ENCODE measurements at regions of chr1 and their contacts with region 1.

Region 1: DNA sequence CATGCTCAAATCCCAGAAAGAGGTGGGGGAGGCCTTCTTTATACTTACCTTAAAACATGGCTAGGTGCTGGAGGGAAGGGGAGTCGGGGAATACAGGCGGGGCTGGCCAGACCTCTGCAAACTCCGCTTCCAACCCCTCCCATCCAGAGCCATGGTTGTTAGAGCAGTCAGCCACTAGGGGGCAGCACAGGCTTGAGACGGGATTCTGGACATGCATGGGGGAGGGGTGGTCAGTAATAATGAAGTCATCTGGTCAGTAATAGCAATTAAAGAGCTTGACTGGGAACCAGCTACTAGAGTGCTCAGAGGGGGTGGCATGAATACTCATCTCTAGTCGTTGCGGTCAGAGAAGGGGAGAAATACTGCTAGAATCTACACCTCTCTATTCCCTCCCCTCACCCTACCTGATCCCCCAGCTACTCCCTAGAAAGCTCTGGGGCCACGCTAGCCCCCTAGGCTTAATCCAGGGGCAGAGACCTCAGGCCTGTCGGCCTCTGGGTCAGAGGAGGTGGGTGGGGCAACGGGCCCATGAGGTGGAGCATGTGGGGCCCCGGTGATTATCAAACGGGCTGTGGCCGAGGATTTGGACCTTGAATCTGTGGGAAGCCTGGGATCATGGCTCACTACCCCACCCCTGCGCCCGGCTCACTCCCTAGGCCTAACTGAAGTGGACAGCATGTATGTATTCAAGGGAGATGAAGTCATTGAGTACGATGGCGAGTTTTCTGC is 2.9 kb downstream of the CASQ1 start:
- DNase-seq: peak; percentile 85 to 90 (median 88)
- ATAC-seq: peak; percentile 82 to 90 (median 84)
- H3K4me3 ChIP-seq: no peak overlapping the region
- H3K27ac ChIP-seq: peak overlapping the region in 11 of 12 donors; percentile 34 to 86 (median 72)
- H3K4me1 ChIP-seq: peaks cover 0 to 42% (median 21%) of the 10 kb centered on the region in 12 donors
- H3K27me3 ChIP-seq: no peaks in the 10 kb centered on the region
- CTCF ChIP-seq: peak; percentile 92 to 99 (median 96)
- POLR2A ChIP-seq: no peak

Region 2: DNA sequence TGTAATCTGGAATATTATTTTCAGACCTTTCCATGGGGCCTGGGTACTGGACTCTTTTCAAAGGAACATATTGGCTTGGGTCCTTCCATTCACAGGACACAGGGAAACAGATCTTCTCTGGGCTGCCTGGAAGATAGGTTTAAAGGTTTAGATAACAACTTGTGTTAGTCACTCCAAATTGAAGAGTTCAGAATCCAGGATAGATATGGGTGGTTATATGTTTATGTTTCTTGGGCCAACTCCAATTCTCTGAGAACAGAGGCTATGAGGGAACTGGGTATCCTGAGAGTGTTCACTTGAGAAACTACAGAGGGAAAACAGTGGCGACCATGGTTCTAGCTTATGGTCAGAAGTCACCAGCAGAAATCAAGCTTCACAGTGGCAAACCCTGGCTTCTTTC is 152.8 kb before region 1 on chr1:
- intact Hi-C with region 1: loop called in 1 of 10 experiments (anchors 5 kb)
- DNase-seq: no peak
- ATAC-seq: no peak
- H3K4me3 ChIP-seq: no peak overlapping the region
- H3K27ac ChIP-seq: no peak overlapping the region
- H3K4me1 ChIP-seq: no peaks in the 10 kb centered on the region
- H3K27me3 ChIP-seq: no peaks in the 10 kb centered on the region
- CTCF ChIP-seq: no peak
- POLR2A ChIP-seq: no peak

Region 3: GRCh38 chr1:160108888-160109662 is 84.2 kb before region 1 on chr1:
- intact Hi-C with region 1: loop called in 5 of 10 experiments (anchors 5 to 10 kb)
- DNase-seq: no peak
- ATAC-seq: peak in 1 of 4 donors; percentile 19
- H3K4me3 ChIP-seq: no peak overlapping the region
- H3K27ac ChIP-seq: no peak overlapping the region
- H3K4me1 ChIP-seq: peaks cover 0 to 31% (median 15%) of the 10 kb centered on the region in 12 donors
- H3K27me3 ChIP-seq: no peaks in the 10 kb centered on the region
- CTCF ChIP-seq: peak; percentile 24 to 60 (median 42)
- POLR2A ChIP-seq: no peak

Region 4: DNA sequence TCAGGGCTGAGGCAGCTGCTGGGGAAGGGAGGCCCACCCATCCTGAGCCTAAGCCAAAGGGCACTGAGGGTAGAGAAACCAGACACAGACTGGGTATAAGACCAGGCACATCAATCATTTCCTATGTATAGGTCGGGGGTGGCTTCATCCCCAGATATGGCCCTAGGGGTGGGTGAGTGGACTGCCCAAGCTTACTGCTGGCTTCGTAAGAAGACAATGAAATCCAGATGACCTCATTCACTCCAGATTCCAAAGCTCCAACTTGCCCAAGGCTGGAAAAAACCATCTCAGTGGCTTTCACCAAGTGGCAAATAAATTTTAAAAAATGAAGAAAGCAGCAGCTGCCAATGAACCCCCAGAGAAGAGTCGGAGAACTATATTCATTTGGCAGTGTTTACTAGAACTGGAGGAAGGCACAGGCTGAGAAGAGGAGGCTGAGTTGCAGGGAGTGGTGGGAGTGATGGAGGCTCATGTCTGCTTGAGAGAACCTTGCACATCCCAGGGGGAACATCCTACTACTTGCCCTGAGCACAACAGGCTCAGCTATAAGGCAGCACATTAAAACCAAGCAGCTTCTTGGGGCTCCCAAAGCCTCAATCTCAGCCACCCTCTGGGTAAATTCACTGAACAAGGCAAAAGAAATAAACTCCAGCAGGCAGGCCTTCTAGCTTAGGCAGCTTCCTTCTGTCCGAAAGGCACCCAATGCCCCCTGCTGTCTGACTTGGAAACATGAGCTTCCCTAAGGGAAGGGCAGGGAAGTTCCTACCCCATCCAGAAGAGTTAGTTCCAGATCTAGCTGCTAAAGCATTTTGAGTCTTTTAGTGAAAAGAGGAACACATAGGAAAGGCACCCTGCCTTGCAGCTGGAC is 26.0 kb after region 1 on chr1:
- intact Hi-C with region 1: loop called in 8 of 10 experiments (anchors 1 to 2 kb)
- DNase-seq: peak in 4 of 5 donors; percentile 55 to 67 (median 64)
- ATAC-seq: peak; percentile 52 to 87 (median 82)
- H3K4me3 ChIP-seq: no peak overlapping the region
- H3K27ac ChIP-seq: peak overlapping the region; percentile 17 to 80 (median 56)
- H3K4me1 ChIP-seq: peaks cover 3 to 51% (median 32%) of the 10 kb centered on the region in 12 donors
- H3K27me3 ChIP-seq: no peaks in the 10 kb centered on the region
- CTCF ChIP-seq: peak; percentile 49 to 78 (median 69)
- POLR2A ChIP-seq: no peak

Region 5: GRCh38 chr1:160251687-160252526 is 58.7 kb after region 1 on chr1:
- intact Hi-C with region 1: loop called in 9 of 10 experiments (anchors 1 to 10 kb)
- DNase-seq: peak in 4 of 5 donors; percentile 58 to 72 (median 64)
- ATAC-seq: peak; percentile 90 to 95 (median 94)
- H3K4me3 ChIP-seq: no peak overlapping the region
- H3K27ac ChIP-seq: peak overlapping the region in 8 of 12 donors; percentile 15 to 59 (median 41)
- H3K4me1 ChIP-seq: peaks cover 0 to 50% (median 27%) of the 10 kb centered on the region in 12 donors
- H3K27me3 ChIP-seq: no peaks in the 10 kb centered on the region
- CTCF ChIP-seq: peak; percentile 48 to 82 (median 68)
- POLR2A ChIP-seq: no peak

Region 6: DNA sequence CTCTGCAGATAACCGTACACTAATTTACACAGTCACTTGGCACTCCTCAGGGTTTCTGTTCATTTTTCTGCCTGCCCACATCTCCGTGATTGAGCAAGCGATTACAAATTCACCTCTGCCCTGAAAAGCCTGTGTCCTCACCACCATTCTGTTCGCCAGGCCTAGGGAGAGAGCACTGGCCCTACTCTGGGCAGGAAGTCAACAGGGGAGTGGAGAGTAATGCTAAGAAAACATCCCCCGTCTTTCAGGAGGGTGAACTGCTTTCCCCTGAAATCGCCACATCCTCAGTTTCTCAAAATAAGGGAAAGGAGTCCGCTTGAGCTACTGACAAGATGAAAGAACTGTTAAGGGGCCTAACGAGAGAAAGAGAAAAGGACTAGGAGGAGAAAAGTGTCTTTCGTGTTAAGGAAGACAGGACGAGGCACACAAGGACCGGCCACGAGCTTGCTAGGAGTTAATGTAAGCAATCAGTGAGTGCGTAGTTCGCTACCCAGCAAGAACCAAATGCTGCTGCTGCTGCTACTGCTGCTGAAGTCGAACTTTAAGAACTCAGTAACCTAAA is 91.0 kb after region 1 on chr1:
- intact Hi-C with region 1: no loop called
- DNase-seq: no peak
- ATAC-seq: peak in 2 of 4 donors; percentile 37 to 47
- H3K4me3 ChIP-seq: peak overlapping the region; percentile 76 to 98 (median 88)
- H3K27ac ChIP-seq: peak overlapping the region; percentile 56 to 92 (median 84)
- H3K4me1 ChIP-seq: peaks cover 0 to 25% (median 18%) of the 10 kb centered on the region in 12 donors
- H3K27me3 ChIP-seq: no peaks in the 10 kb centered on the region
- CTCF ChIP-seq: no peak
- POLR2A ChIP-seq: no peak

Region 7: GRCh38 chr1:160376525-160377131 is 183.4 kb after region 1 on chr1:
- intact Hi-C with region 1: loop called in 4 of 10 experiments (anchors 2 to 10 kb)
- DNase-seq: no peak
- ATAC-seq: peak; percentile 56 to 86 (median 80)
- H3K4me3 ChIP-seq: peak overlapping the region in 1 of 12 donors; percentile 20
- H3K27ac ChIP-seq: peak overlapping the region in 4 of 12 donors; percentile 11 to 42 (median 40)
- H3K4me1 ChIP-seq: peaks cover 0 to 23% (median 10%) of the 10 kb centered on the region in 12 donors
- H3K27me3 ChIP-seq: peaks cover 0 to 3% (median 0%) of the 10 kb centered on the region in 9 donors
- CTCF ChIP-seq: peak; percentile 68 to 95 (median 88)
- POLR2A ChIP-seq: no peak

Measured in heart left ventricle (tissue), 16 donors.